Panc1 (cell line): ENCODE measurements at regions of chr18 and their contacts with region 1.

Region 1: GRCh38 chr18:75167759-75168618 is 41.0 kb downstream of the PTGR3 start:
- DNase-seq: no peak
- ATAC-seq: no peak
- H3K4me3 ChIP-seq: no peak overlapping the region
- H3K27ac ChIP-seq: no peak overlapping the region
- H3K4me1 ChIP-seq: no peaks in the 10 kb centered on the region
- H3K27me3 ChIP-seq: no peaks in the 10 kb centered on the region
- CTCF ChIP-seq: no peak

Region 2: GRCh38 chr18:74990563-74991081 is 177.4 kb before region 1 on chr18:
- CTCF ChIA-PET with region 1: no interaction called
- POLR2A ChIA-PET with region 1: interaction called, 12 read pairs
- in situ Hi-C with region 1: no loop called
- intact Hi-C with region 1: no loop called
- DNase-seq: no peak
- ATAC-seq: no peak
- H3K4me3 ChIP-seq: no peak overlapping the region
- H3K27ac ChIP-seq: no peak overlapping the region
- H3K4me1 ChIP-seq: peaks cover 18% of the 10 kb centered on the region
- H3K27me3 ChIP-seq: no peaks in the 10 kb centered on the region
- CTCF ChIP-seq: no peak